ENCODE measurements at regions of chr17 and their contacts with region 1.

Region 1: GRCh38 chr17:17051791-17052461 is 9.7 kb downstream of the MPRIP start:
- DNase-seq: peak; percentile 80 to 91
- H3K4me3 ChIP-seq: peak overlapping the region; percentile 9; the same call in 1 of the 2 replicates
- H3K27ac ChIP-seq: peak overlapping the region; percentile 84
- H3K4me1 ChIP-seq: peaks cover 93% of the 10 kb centered on the region
- H3K27me3 ChIP-seq: no peaks in the 10 kb centered on the region
- CTCF ChIP-seq: no peak

Region 2: DNA sequence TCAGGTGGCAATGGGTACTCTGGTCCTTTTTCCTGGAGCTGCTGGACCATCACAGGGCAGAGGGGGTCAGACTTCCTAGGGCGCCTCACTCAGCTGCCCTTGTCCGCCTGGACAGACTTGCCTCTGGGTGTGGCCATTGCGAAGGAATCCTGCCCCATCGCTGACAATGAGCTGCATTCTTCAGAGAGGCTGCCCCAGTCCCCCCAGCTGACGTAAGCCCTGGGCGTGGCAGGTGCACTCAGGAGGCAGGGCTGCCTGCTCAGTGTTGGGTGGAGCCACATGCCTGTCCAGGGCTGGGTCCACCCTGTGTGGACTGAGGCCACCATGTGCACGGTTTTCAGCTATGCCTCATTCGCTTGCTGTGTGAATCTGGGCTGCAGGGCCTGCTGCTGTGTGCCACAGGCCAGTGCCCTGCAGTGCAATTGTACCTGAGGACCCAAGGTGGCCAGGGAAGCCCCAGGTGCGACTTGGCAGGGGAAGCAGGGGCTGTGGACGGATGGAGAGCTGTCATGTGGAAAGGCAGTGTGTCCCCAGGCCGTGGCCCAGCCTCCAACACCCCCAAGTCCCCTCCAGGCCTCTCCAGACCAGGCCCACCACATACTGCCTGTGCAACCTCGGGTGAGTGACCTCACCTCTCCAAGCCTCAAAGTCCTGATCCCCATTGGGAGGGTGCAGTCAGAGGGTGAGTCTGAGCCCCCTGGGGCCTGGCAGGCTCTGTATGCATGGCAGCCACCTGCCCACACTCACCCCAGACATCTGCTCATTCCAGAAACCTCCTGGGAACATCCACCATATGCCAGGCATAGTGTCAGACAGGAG is 23.7 kb before region 1 on chr17:
- CTCF ChIA-PET with region 1: interaction called, 4 read pairs
- POLR2A ChIA-PET with region 1: interaction called, 14 read pairs
- intact Hi-C with region 1: no loop called
- DNase-seq: peak; percentile 99 to 100
- H3K4me3 ChIP-seq: peak overlapping the region; percentile 5; the same call in 1 of the 2 replicates
- H3K27ac ChIP-seq: peak overlapping the region; percentile 88
- H3K4me1 ChIP-seq: peaks cover 68% of the 10 kb centered on the region
- H3K27me3 ChIP-seq: no peaks in the 10 kb centered on the region
- CTCF ChIP-seq: no peak; the same call in 1 of the 2 replicates

Region 3: GRCh38 chr17:17041571-17042380 is 10.2 kb before region 1 on chr17:
- CTCF ChIA-PET with region 1: interaction called, 4 read pairs
- POLR2A ChIA-PET with region 1: interaction called, 11 read pairs
- intact Hi-C with region 1: loop called (anchors 1 kb)
- DNase-seq: peak; percentile 93 to 99
- H3K4me3 ChIP-seq: peak overlapping the region; percentile 60; the same call in 1 of the 2 replicates
- H3K27ac ChIP-seq: peak overlapping the region; percentile 36
- H3K4me1 ChIP-seq: peaks cover 59% of the 10 kb centered on the region
- H3K27me3 ChIP-seq: no peaks in the 10 kb centered on the region
- CTCF ChIP-seq: no peak

Region 4: GRCh38 chr17:17077811-17078744 is 26.2 kb after region 1 on chr17:
- CTCF ChIA-PET with region 1: no interaction called
- POLR2A ChIA-PET with region 1: interaction called, 4 read pairs
- intact Hi-C with region 1: loop called (anchors 1 kb)
- DNase-seq: peak; percentile 84 to 95
- H3K4me3 ChIP-seq: peak overlapping the region; percentile 36; the same call in 1 of the 2 replicates
- H3K27ac ChIP-seq: peak overlapping the region; percentile 85
- H3K4me1 ChIP-seq: peaks cover 79% of the 10 kb centered on the region
- H3K27me3 ChIP-seq: no peaks in the 10 kb centered on the region
- CTCF ChIP-seq: no peak